PC-3 (cell line): ENCODE measurements at regions of chr19 and their contacts with region 1.

Region 1: DNA sequence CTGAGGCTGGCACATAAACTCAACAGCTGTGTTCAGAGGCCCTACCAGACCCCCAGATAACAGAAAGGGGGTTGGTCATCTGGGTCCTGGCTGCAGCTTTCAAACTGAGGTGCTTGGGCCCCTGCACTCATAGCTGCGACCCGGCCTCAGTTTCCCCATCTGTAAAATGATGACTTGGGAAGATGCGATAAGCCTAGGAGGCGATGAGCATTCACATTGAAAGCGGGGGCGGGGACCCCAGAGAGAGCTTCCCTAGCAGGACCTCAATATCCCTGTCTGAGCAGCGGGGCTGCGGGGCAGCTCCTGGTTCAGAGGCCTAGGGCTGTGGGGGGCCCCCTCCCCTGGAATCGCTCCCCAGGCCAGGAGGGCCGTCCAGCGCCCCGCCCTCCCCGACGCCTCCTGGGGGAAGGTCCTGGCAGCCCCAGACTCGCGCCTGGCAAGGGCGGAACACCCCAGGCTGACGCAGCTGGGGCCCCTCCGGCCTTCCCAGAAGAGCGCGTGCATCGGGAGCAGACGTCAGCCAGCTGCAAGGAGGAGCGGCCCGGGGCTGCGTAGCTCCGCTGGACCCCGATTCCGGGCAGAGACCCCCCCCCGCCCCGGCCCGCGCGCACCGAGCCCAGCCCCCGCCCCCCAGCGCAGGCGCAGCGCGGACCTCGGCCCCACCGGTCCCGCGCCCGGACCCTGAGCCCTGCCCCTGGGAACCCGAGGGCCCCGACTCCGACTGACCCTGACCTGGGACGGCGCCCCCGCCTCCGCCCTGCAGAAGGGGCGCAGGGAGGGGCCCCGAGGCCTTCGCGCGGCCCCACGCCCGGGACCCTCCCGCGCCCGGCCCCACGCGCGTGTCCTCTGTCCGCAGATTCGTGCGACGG is 3.5 kb downstream of the FSTL3 start:
- DNase-seq: peak; percentile 38
- ATAC-seq: peak; percentile 10
- H3K4me3 ChIP-seq: peak overlapping the region; percentile 70
- H3K27ac ChIP-seq: peak overlapping the region; percentile 52
- H3K4me1 ChIP-seq: peaks cover 21% of the 10 kb centered on the region
- H3K27me3 ChIP-seq: no peaks in the 10 kb centered on the region
- CTCF ChIP-seq: no peak

Region 2: DNA sequence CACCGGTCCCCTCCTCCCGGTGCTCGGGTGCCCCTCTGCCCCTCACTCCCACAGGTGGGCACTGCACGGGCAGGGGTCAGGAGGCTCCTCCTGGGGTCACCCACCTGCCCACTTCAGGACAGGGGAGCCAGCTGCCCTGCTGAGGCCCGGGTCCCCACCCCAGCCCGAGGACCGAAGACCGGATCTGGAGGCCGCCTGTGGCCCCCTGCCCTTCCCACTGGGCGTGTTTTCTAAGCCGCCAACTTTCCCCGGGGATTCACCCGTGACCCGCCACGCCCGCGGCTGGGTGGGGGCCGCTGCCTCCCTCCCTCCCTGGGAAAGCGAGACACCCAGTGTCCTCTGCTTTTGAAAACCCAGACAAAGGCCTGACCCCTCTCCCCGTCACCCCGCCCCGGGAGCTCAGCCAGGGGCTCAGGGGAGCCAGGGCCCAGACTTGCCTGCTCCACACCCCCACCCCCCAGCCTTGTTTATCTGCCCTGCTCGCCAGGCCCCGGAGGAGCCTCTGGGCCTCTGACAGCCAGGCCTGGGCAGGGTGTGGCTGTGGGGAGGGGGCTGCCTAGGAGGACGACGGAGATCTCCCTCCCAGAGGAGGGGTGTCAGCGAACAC is 30.4 kb after region 1 on chr19:
- CTCF ChIA-PET with region 1: no interaction called
- POLR2A ChIA-PET with region 1: no interaction called
- intact Hi-C with region 1: loop called (anchors 5 kb)
- DNase-seq: no peak
- ATAC-seq: no peak
- H3K4me3 ChIP-seq: no peak overlapping the region; the same call in 1 of the 2 replicates
- H3K27ac ChIP-seq: no peak overlapping the region
- H3K4me1 ChIP-seq: no peaks in the 10 kb centered on the region
- H3K27me3 ChIP-seq: no peaks in the 10 kb centered on the region
- CTCF ChIP-seq: no peak

Region 3: DNA sequence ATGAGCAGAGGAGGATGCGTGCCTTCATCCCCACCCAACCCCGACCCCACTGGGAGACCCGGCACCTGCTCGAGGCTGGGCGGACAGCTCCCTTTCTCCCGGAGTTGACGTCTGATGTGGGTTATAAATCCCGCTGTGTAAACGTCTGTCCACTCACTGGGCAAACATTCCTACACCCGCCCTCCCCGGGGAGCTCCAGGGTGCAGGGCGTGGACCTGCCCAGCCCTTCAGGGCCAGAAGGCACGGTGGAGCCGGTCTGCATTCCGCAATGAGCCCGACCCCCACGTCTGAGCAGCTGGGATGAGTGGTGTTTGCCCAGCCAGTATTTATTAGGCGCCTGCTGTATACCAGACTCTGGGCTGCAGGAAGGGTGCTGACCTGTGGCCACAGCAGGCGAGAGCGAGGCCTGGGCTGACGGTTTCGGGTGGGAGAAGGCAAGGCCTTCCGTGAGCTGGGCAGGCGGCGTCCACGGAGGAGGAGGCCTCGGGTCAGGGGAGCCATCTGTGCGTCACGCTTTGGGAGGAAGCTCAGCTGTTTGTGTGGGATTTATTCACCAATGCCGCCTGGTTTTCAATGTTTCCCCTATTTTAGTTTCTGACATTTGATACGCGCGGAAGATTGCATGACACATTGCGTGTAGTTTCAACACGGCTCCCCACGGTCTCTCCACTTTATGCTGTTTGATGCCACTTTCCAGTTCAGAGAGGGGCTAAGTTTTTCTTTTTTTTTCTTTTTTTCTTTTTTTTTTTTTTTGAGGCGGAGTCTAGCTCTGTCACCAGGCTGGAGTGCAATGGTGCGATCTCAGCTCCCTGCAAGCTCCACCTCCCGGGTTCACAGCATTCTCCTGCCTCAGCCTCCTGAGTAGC is 73.2 kb after region 1 on chr19:
- CTCF ChIA-PET with region 1: no interaction called
- POLR2A ChIA-PET with region 1: interaction called, 4 read pairs
- intact Hi-C with region 1: loop called (anchors 5 kb)
- DNase-seq: peak; percentile 94
- ATAC-seq: peak; percentile 75
- H3K4me3 ChIP-seq: peak overlapping the region; percentile 61
- H3K27ac ChIP-seq: peak overlapping the region; percentile 98
- H3K4me1 ChIP-seq: peaks cover 16% of the 10 kb centered on the region
- H3K27me3 ChIP-seq: no peaks in the 10 kb centered on the region
- CTCF ChIP-seq: no peak

Region 4: GRCh38 chr19:1227655-1228054 is 548.0 kb after region 1 on chr19:
- CTCF ChIA-PET with region 1: no interaction called
- POLR2A ChIA-PET with region 1: interaction called, 17 read pairs
- intact Hi-C with region 1: no loop called
- DNase-seq: no peak
- ATAC-seq: no peak
- H3K4me3 ChIP-seq: no peak overlapping the region
- H3K27ac ChIP-seq: no peak overlapping the region
- H3K4me1 ChIP-seq: peaks cover 11% of the 10 kb centered on the region
- H3K27me3 ChIP-seq: no peaks in the 10 kb centered on the region
- CTCF ChIP-seq: no peak